Lower leg skin (tissue), 4 donors: ENCODE measurements at regions of chr19 and their contacts with region 1.

Region 1: DNA sequence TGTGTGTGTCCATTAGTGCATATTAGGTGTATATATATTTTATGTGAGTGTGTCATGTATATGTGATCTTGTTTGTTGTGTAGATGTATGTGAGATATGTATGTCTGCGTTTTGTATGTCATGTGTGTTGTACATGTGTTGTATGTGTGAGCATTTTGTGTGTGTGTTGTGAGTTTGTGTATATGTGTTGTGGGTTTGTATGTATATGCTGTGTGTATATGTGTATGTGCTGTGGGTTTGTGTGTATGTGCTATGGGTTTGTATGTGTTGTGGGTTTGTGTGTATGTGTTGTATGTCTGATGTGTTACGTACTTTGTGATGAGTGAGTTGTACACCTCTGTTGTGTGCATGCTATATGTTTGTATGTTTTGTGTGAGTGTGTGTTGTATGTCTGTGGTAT is 8.1 kb downstream of the CEACAM20 start:
- DNase-seq: no peak
- H3K4me3 ChIP-seq: no peak overlapping the region
- CTCF ChIP-seq: no peak
- POLR2A ChIP-seq: no peak

Region 2: DNA sequence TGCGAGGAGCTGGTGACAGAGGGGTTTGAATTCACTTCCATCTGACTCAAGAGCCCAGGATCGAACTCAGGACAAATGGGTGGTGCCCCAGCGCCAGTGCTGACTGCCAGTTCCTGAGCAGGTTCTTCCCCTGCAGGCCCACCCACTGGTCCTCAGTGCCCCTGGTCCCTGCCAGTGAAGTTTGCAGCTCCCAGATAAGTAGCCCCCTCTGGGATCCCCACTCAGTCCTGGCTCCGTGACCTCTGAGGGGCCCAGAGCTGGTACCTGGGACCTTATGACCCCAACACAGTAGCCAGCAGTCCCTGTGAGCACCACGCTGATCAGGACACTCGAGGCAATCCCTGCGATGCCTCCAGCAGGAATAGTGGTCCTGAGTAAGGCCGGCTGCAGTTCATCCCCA is 19.4 kb after region 1 on chr19:
- intact Hi-C with region 1: loop called (anchors 1 kb)
- DNase-seq: no peak
- H3K4me3 ChIP-seq: no peak overlapping the region
- CTCF ChIP-seq: no peak
- POLR2A ChIP-seq: no peak